Mammary epithelial cell (primary cell): ENCODE measurements at regions of chr1 and their contacts with region 1.

Region 1: DNA sequence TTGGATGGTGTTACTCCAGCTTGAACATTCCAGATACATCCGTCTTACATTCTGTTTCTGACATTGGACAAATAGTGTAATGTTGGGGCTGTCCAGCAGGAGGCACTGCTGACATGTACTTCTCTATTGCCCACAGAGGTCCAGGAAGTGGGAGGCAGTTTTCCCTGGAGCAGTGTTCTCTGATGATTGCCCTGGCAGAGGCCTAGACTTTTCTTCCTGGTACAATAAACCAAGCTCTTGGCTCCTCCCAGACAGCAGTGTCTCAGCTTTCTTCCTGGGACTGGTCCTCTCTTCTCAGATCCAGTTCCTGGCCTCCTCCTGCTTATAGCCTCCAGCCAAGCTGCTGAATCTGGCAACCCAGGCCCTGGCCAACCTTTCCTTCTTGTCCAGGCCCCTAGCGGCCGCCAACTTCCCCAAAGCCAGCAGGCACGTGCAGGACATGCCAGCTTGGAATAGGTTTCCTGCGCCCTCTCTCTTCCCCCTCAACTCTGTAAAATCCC is 14.9 kb upstream of the IFNLR1 start:
- DNase-seq: peak; percentile 92
- H3K4me3 ChIP-seq: no peak overlapping the region
- H3K27ac ChIP-seq: peak overlapping the region; percentile 27
- H3K4me1 ChIP-seq: peaks cover 17% of the 10 kb centered on the region
- H3K27me3 ChIP-seq: no peaks in the 10 kb centered on the region
- CTCF ChIP-seq: peak; percentile 79 to 80

Region 2: GRCh38 chr1:24150234-24151174 is 51.5 kb before region 1 on chr1:
- CTCF ChIA-PET with region 1: interaction called, 8 read pairs
- dilution Hi-C with region 1: no loop called
- in situ Hi-C with region 1: no loop called
- intact Hi-C with region 1: loop called (anchors 1 kb)
- DNase-seq: peak; percentile 88
- H3K4me3 ChIP-seq: peak overlapping the region; percentile 26 to 33 (median 29)
- H3K27ac ChIP-seq: peak overlapping the region; percentile 93
- H3K4me1 ChIP-seq: peaks cover 30% of the 10 kb centered on the region
- H3K27me3 ChIP-seq: no peaks in the 10 kb centered on the region
- CTCF ChIP-seq: peak; percentile 72 to 88

Region 3: DNA sequence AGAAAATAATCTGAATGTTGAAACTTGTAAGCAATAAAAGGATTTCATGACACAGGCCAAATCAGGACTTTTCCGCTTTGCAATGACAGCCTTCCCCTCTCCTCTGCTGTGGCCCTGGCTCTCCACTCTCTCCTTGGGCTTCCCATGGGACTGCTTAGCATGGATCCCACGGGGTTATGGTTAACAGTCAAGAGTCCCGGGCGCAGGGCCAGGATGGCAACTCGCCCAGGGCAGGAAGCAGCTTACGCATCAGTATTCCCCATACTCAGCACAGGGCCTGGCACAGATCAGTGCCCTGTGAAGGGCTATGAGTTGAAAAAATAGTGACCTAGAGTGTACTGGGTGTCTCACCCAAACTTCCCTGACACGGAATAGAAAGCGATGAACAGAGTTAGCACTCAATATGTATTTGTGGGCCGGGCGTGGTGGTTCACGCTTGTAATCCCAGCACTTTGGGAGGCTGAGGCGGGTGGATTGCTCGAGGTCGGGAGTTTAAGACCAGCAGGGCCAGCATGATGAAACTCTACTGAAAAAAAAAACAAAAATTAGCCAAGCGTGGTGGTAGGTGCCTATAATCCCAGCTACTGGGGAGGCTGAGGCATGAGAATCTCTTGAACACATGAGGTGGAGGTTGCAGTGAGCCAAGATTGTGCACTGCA is 88.1 kb after region 1 on chr1:
- CTCF ChIA-PET with region 1: interaction called, 13 read pairs
- dilution Hi-C with region 1: no loop called
- in situ Hi-C with region 1: no loop called
- intact Hi-C with region 1: no loop called
- DNase-seq: peak; percentile 91
- H3K4me3 ChIP-seq: no peak overlapping the region
- H3K27ac ChIP-seq: peak overlapping the region; percentile 11
- H3K4me1 ChIP-seq: peaks cover 62% of the 10 kb centered on the region
- H3K27me3 ChIP-seq: no peaks in the 10 kb centered on the region
- CTCF ChIP-seq: no peak

Region 4: GRCh38 chr1:24502709-24503058 is 300.7 kb after region 1 on chr1 and contains the start of gene RCAN3:
- CTCF ChIA-PET with region 1: no interaction called
- dilution Hi-C with region 1: no loop called
- in situ Hi-C with region 1: no loop called
- intact Hi-C with region 1: loop called (anchors 10 kb)
- DNase-seq: peak; percentile 88
- H3K4me3 ChIP-seq: peak within 1 kb of the TSS; percentile 81 to 97 (median 94)
- H3K27ac ChIP-seq: peak within 1 kb of the TSS; percentile 84
- H3K4me1 ChIP-seq: peaks cover 11% of the 10 kb centered on the region
- H3K27me3 ChIP-seq: no peaks in the 10 kb centered on the region
- CTCF ChIP-seq: no peak
- total RNA-seq, gene RCAN3: 21.0 to 34.8 TPM

Region 5: GRCh38 chr1:24635195-24635843 is 433.3 kb after region 1 on chr1:
- CTCF ChIA-PET with region 1: interaction called, 4 read pairs
- dilution Hi-C with region 1: loop called (anchors 5 kb)
- in situ Hi-C with region 1: loop called in 1 of 2 experiments (anchors 25 kb)
- intact Hi-C with region 1: no loop called
- DNase-seq: peak; percentile 61
- H3K4me3 ChIP-seq: no peak overlapping the region
- H3K27ac ChIP-seq: no peak overlapping the region
- H3K4me1 ChIP-seq: no peaks in the 10 kb centered on the region
- H3K27me3 ChIP-seq: no peaks in the 10 kb centered on the region
- CTCF ChIP-seq: peak; percentile 58 to 72